ENCODE measurements at regions of chr10 and their contacts with region 1.

Region 1: DNA sequence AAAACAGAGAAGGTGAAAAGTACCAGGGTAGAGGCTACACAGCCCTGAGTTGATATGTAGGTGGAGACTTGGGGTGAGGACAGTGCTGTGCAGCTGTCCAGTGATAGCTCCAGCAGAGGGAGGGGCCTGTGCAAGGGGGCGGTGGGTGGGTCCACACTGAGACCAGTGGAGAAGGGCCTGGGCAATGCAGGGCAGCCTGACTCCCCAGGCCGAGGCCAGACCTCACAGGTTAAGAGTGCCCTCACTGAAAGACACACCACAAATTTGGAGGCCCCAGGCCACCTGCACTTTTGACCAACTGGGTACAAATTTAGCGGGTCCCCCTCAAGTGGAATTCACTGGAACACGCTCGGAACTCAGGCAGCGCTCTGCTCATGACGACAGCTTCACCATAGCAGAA is 6.7 kb upstream of the RASGEF1A start:
- DNase-seq: no peak
- ATAC-seq: no peak
- H3K4me3 ChIP-seq: no peak overlapping the region
- H3K27ac ChIP-seq: no peak overlapping the region
- H3K4me1 ChIP-seq: no peaks in the 10 kb centered on the region
- H3K27me3 ChIP-seq: peaks cover 1 to 21% of the 10 kb centered on the region in 2 experiments; a peak in 1 of 5 replicates
- CTCF ChIP-seq: no peak
- EP300 ChIP-seq: no peak
- POLR2A ChIP-seq: no peak
- RAD21 ChIP-seq: no peak

Region 2: GRCh38 chr10:43229208-43230061 is 44.1 kb before region 1 on chr10:
- CTCF ChIA-PET with region 1: no interaction called
- POLR2A ChIA-PET with region 1: no interaction called
- in situ Hi-C with region 1: no loop called
- intact Hi-C with region 1: no loop called
- DNase-seq: no peak
- ATAC-seq: peak; percentile 80
- H3K4me3 ChIP-seq: peak overlapping the region in 2 of 3 experiments; percentile 33 to 50; a peak in 3 of 6 replicates
- H3K27ac ChIP-seq: no peak overlapping the region
- H3K4me1 ChIP-seq: no peaks in the 10 kb centered on the region
- H3K27me3 ChIP-seq: peaks cover 11 to 59% of the 10 kb centered on the region in 2 experiments; a peak in 4 of 5 replicates
- CTCF ChIP-seq: peak; percentile 24; the same call in 1 of the 2 replicates
- EP300 ChIP-seq: no peak
- POLR2A ChIP-seq: no peak
- RAD21 ChIP-seq: no peak

Region 3: GRCh38 chr10:43287056-43288007 is 13.8 kb after region 1 on chr10:
- CTCF ChIA-PET with region 1: no interaction called
- POLR2A ChIA-PET with region 1: no interaction called
- in situ Hi-C with region 1: no loop called
- intact Hi-C with region 1: no loop called
- DNase-seq: no peak
- ATAC-seq: no peak
- H3K4me3 ChIP-seq: no peak overlapping the region; a peak in 1 of 6 replicates
- H3K27ac ChIP-seq: no peak overlapping the region
- H3K4me1 ChIP-seq: peaks cover 11% of the 10 kb centered on the region; the same call in 1 of the 2 replicates
- H3K27me3 ChIP-seq: peaks cover 0 to 8% of the 10 kb centered on the region in 2 experiments; a peak in 1 of 5 replicates
- CTCF ChIP-seq: no peak
- EP300 ChIP-seq: no peak
- POLR2A ChIP-seq: no peak
- RAD21 ChIP-seq: no peak

Region 4: GRCh38 chr10:43683451-43684291 is 410.1 kb after region 1 on chr10:
- CTCF ChIA-PET with region 1: no interaction called
- POLR2A ChIA-PET with region 1: no interaction called
- in situ Hi-C with region 1: no loop called
- intact Hi-C with region 1: loop called (anchors 5 kb)
- DNase-seq: peak; percentile 19
- ATAC-seq: peak; percentile 89
- H3K4me3 ChIP-seq: no peak overlapping the region
- H3K27ac ChIP-seq: no peak overlapping the region
- H3K4me1 ChIP-seq: no peaks in the 10 kb centered on the region
- H3K27me3 ChIP-seq: peaks cover 0 to 4% of the 10 kb centered on the region in 2 experiments; a peak in 1 of 5 replicates
- CTCF ChIP-seq: peak; percentile 62
- EP300 ChIP-seq: no peak
- POLR2A ChIP-seq: no peak
- RAD21 ChIP-seq: no peak

Measured in HepG2 (cell line).